Dorsolateral prefrontal cortex (tissue), 120 donors: ENCODE measurements at regions of chr20 and their contacts with region 1.

Region 1: GRCh38 chr20:48657475-48658470 is 170.0 kb downstream of the PREX1 start:
- DNase-seq: peak; percentile 46 to 89 (median 83)
- H3K4me3 ChIP-seq: peak overlapping the region in 8 of 59 donors; percentile 1 to 71 (median 22)
- H3K27ac ChIP-seq: peak overlapping the region; percentile 72 to 100 (median 96)
- H3K27me3 ChIP-seq: no peaks in the 10 kb centered on the region
- CTCF ChIP-seq: peak; percentile 85 to 98 (median 94)

Region 2: DNA sequence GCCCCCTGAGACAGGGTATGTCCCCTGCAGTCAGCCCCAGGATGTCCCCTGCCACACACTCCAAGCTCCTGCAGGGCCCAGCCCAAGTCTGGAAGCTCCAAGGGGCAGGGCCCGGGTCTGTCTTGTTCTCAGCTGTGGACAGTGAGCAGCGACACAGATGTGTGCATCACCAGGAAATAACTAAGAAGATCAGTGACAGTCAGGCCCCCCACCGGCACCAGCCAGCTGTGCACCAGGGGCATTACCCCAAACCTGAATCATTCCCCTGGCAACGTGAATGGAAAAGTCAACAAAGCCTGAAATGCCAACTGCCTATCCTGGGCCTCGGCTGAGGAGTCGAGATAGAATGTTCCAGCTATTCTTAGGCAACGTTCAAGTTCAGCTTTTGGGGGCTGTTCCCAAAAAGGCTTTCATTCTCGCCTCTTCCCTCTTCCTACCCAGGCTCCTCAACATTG is 65.0 kb after region 1 on chr20:
- intact Hi-C with region 1: loop called in 1 of 2 experiments (anchors 5 kb)
- DNase-seq: no peak
- H3K4me3 ChIP-seq: peak overlapping the region in 2 of 59 donors; percentile 2 to 5
- H3K27ac ChIP-seq: peak overlapping the region; percentile 80 to 100 (median 98)
- H3K27me3 ChIP-seq: no peaks in the 10 kb centered on the region
- CTCF ChIP-seq: no peak

Region 3: GRCh38 chr20:48745326-48745725 is 87.6 kb after region 1 on chr20:
- intact Hi-C with region 1: loop called (anchors 1 to 2 kb)
- DNase-seq: no peak
- H3K4me3 ChIP-seq: no peak overlapping the region
- H3K27ac ChIP-seq: peak overlapping the region in 55 of 59 donors; percentile 12 to 100 (median 82)
- H3K27me3 ChIP-seq: no peaks in the 10 kb centered on the region
- CTCF ChIP-seq: peak in 10 of 56 donors; percentile 16 to 42 (median 23)

Region 4: GRCh38 chr20:48828022-48828743 is 170.4 kb after region 1 on chr20:
- intact Hi-C with region 1: loop called (anchors 1 kb)
- DNase-seq: peak; percentile 26 to 88 (median 72)
- H3K4me3 ChIP-seq: peak overlapping the region; percentile 48 to 94 (median 69)
- H3K27ac ChIP-seq: peak overlapping the region; percentile 9 to 98 (median 92)
- H3K27me3 ChIP-seq: no peaks in the 10 kb centered on the region
- CTCF ChIP-seq: peak in 42 of 56 donors; percentile 8 to 65 (median 32)

Region 5: DNA sequence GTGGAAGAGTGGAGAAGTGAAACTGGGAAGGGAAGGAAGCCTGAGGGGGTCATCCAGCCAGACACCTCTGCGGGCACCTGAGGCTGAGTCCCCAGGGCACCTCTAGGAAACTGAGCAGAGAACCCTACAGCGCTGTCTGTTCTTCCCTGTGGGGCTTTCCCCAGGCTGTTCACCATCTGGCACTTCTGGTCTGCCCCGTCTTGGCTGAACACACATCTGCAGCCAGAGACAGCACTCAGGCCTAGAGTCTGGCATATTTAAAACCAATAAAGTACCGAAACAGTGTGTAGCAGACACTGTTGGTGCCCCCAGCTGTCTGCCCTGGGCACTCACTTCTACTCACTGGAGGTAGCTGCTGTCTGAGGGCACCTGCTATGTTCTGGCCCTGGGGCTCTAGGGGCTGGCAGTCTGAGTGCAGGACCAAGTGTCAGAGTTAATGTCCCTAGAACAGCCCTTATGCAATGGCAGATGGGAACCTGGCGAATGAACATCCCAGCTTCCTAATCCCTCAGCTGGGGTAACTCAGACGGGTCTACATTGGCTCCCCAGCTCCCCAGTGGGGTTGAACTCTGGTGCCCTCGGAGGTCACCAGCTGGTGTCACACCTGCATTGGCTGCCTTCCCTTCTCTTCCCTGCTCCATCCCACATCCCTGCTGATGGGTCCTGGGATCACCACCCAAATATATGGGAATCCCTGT is 254.4 kb after region 1 on chr20:
- intact Hi-C with region 1: loop called in 1 of 2 experiments (anchors 2 kb)
- DNase-seq: no peak
- H3K4me3 ChIP-seq: no peak overlapping the region
- H3K27ac ChIP-seq: no peak overlapping the region
- H3K27me3 ChIP-seq: no peaks in the 10 kb centered on the region
- CTCF ChIP-seq: no peak